ENCODE measurements at regions of chr16 and their contacts with region 1.

Region 1: GRCh38 chr16:17676171-17676570 is 205.4 kb upstream of the XYLT1 start:
- DNase-seq: no peak
- H3K4me3 ChIP-seq: no peak overlapping the region
- H3K27ac ChIP-seq: no peak overlapping the region
- H3K27me3 ChIP-seq: no peaks in the 10 kb centered on the region
- CTCF ChIP-seq: no peak

Region 2: GRCh38 chr16:17691106-17691898 is 15.1 kb after region 1 on chr16:
- CTCF ChIA-PET with region 1: no interaction called
- POLR2A ChIA-PET with region 1: interaction called, 11 read pairs
- DNase-seq: no peak
- H3K4me3 ChIP-seq: no peak overlapping the region
- H3K27ac ChIP-seq: no peak overlapping the region
- H3K27me3 ChIP-seq: no peaks in the 10 kb centered on the region
- CTCF ChIP-seq: no peak